Ascending aorta (tissue), 2 donors: ENCODE measurements at regions of chr9 and their contacts with region 1.

Region 1: DNA sequence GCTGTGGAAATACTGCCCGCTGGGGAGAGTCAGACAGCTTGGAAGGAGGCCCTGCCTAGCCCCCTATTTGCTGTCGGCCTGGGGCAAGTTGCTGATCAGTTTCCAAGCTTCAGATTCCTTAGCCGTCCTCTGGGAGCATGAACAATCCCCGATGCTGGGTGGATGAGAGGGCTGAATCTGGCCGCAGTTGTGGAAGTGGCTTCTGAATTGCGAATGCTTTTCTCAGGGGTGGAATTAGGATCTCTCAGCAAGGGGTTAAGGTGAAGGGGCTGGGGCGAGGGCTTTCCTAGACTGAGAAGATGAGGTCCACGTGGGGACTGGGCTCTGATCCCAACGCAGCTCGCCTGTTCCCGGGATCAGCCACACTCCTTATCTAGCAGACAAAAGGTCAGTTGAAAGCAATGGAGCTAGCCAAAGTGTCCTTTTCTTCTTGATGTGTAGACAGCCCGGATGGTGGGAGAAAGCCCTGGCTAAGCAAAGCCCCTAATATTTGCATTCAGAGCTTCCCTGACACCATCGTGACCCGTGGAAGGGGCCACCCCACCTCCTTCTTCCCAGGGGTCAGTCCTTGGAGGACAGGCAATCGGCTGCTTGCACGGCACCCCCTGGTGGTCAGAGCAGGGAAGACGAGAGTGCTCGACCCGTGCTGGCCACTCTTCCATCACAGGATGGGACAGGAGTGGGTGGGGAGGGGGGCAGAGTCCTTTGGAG is 54.9 kb downstream of the COL15A1 start:
- DNase-seq: peak in 1 of 2 donors; percentile 92
- H3K4me3 ChIP-seq: peak overlapping the region; percentile 10 to 46
- H3K27ac ChIP-seq: peak overlapping the region; percentile 37 to 63
- H3K4me1 ChIP-seq: peaks cover 2 to 28% of the 10 kb centered on the region in 2 donors
- H3K27me3 ChIP-seq: no peaks in the 10 kb centered on the region
- CTCF ChIP-seq: peak; percentile 81 to 91 (median 84)

Region 2: DNA sequence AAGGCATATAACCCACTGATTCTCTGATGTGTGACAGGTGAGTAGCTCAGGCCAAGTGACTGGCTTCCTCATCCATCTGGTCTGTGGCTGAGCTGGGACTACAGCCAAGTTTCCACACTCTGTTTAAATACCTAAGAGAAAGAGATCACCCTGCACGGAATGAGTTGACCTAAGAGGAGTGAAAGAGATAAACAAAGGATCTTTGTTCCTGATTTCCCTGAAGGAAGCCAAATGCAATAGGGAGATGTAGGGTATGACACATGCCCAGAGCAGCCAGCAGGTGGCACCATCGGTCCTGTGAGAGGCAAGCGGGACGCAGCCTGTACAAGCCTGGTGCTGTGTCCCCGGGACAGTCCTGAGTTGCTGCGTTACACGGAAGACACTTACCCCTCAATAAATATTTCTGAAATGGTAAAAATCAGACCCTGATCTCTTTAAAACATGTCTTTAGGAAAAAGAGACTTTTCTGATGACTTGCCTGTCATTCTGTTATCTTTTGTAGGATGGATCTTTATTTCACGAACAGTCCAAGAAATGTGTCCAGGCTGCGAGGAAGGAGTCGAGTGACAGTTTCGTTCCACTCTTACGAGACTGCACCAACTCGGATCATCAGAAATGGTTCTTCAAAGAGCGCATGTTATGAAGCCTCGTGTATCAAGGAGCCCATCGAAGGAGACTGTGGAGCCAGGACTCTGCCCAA is 150.0 kb before region 1 on chr9:
- intact Hi-C with region 1: loop called (anchors 1 kb)
- DNase-seq: peak; percentile 26 to 92
- H3K4me3 ChIP-seq: peak overlapping the region; percentile 35 to 55
- H3K27ac ChIP-seq: no peak overlapping the region
- H3K4me1 ChIP-seq: no peaks in the 10 kb centered on the region
- H3K27me3 ChIP-seq: no peaks in the 10 kb centered on the region
- CTCF ChIP-seq: peak; percentile 78 to 90 (median 83)

Region 3: GRCh38 chr9:98860871-98861293 is 137.7 kb before region 1 on chr9:
- intact Hi-C with region 1: loop called (anchors 5 kb)
- DNase-seq: peak in 1 of 2 donors; percentile 79
- H3K4me3 ChIP-seq: no peak overlapping the region
- H3K27ac ChIP-seq: no peak overlapping the region
- H3K4me1 ChIP-seq: no peaks in the 10 kb centered on the region
- H3K27me3 ChIP-seq: no peaks in the 10 kb centered on the region
- CTCF ChIP-seq: peak in 2 of 3 experiments; percentile 7 to 58

Region 4: DNA sequence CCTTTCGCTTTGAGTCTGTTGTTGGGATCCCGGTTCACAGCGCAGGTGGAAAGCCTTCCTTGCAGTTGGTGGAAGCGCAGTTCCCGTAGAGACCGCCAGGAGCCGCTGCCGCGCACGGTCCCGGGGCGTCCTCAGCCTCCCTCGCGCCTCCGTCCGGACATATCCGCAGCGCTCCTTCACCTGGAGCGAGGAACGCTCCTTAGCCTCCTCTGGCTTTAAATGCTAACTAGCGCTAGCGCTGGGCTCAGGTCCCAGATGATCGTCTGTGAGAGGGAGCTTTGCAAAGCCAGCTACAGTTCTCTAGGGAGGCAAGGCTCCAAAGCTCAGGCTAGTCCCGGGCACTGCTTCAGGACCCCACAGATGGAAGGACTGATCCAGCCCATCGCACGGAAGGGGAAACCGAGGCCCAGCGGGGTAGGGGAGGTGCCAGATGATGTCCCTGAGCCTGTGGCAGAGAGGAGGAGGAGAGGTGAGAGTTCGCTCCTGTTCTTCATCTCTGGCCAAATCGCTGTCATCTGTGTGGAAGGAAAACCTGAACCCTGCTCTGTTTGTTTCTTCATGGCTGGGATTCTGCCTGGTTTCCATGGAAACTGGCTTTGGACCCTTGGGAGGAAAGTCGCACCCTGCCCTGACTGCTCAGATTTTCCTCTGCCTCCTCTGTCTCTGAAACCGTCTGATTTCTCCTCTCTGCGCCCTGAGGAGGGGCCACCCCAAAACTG is 23.4 kb before region 1 on chr9:
- intact Hi-C with region 1: loop called (anchors 1 kb)
- DNase-seq: peak in 1 of 2 donors; percentile 92
- H3K4me3 ChIP-seq: peak overlapping the region; percentile 39 to 56
- H3K27ac ChIP-seq: peak overlapping the region; percentile 40 to 47
- H3K4me1 ChIP-seq: peaks cover 0 to 29% of the 10 kb centered on the region in 2 donors
- H3K27me3 ChIP-seq: no peaks in the 10 kb centered on the region
- CTCF ChIP-seq: peak; percentile 94 to 100 (median 99)

Region 5: DNA sequence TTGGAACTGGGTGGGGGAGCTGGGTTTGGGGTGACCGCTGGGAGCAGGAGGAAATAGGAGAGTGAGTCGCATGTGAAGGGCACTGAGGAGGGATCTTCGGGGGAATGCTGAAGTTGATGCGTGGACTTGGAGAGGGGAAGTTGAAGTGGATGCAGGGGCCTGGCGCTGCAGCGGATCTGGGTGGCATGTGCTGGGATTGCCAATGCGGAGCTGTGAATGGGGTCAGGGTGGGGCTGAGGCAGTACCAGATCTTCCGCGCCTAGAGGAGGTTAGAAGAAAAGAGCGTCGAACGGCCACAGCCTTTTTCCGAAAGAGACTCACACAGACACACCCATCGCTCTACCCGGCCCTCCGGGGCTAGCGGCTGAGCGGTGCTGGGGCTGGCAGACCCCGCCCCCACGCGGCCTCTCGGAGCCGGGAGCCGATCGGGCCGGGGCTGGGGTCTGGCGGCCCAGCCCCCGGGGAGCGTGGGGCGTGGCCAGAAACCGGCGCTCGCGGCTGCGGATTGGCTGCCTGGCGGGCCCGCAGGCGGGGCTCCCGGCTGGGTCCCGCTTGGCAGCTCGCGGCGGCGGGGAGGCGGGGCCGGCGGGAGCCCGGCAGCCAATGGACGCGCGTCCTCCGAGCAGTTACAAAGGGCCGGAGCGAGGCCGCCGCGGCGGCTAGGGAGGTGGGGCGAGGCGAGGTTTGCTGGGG is 106.0 kb after region 1 on chr9 and contains the start of gene TGFBR1:
- intact Hi-C with region 1: loop called (anchors 2 kb)
- DNase-seq: peak; percentile 72 to 97
- H3K4me3 ChIP-seq: peak within 1 kb of the TSS; percentile 82 to 87
- H3K27ac ChIP-seq: peak within 1 kb of the TSS; percentile 92 to 95
- H3K4me1 ChIP-seq: peaks cover 0 to 34% of the 10 kb centered on the region in 2 donors
- H3K27me3 ChIP-seq: no peaks in the 10 kb centered on the region
- CTCF ChIP-seq: no peak
- total RNA-seq, gene TGFBR1: 13.9 TPM

Region 6: DNA sequence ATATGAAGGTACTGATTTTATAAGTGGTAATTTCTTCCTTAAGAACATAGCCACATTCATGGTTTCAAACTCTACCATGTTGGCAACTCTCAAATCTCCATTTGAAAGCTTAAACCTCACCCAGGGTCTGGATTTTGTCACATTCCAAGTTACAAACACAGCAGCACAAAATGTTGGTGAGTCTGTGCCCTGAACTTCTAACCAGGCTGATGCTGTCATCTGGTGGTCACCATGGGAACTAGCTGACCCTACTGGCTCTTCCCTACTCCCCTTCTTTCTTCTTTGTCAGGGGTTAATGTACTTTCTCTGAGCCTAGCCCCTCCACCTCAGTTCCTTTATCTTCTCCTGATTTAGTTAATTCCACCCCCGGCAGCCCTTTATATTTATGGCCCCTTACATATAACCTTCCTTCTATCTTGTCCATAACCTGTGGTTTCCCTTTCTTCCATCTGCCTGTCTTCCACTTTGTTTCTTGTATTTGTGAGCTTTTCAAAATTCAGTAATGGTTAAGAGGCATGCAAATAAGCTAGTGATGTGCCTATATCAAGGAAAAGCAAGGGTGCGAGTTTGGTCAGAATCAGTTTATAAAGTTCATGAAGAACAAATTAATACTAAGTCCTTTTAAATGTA is 142.2 kb after region 1 on chr9:
- intact Hi-C with region 1: loop called (anchors 2 kb)
- DNase-seq: peak in 1 of 2 donors; percentile 60
- H3K4me3 ChIP-seq: no peak overlapping the region
- H3K27ac ChIP-seq: no peak overlapping the region
- H3K4me1 ChIP-seq: no peaks in the 10 kb centered on the region
- H3K27me3 ChIP-seq: no peaks in the 10 kb centered on the region
- CTCF ChIP-seq: peak; percentile 71 to 78 (median 72)

Region 7: DNA sequence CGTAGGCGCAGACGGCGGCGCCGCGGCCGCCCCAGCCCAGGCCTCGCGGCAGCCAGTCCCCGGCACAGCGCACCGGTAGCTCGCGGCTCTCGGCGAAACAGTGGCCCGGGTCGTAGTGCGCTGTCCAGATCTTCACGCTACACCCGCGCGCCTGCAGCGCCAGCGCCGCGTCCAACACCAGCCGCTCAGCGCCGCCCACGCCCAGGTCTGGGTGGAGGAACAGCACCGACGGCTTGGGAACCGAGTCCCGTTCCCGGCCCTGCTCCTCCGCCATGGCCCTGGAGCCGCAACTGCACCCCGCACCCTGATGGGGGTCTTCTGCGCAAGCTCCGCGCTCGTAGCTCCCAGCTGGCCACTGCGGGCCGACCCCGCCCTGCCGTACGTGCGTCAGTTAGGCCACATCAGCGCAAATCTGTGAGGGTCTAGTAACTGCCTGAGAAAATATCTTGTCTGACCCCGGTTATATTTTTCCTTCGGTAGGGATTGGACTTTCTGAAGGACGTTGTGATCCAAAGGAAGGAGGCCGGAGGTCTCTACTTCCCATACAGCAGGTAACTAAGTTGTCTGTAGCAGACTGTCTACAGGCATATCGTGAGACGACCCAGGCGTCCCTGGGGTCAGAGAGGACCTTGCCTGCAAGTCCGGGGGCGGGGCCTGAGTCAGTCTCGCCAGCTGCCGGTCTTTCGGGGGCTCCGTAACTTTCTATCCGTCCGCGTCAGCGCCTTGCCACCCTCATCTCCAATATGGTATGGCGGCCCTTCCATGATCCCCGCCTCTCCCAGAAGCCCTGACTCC is 223.2 kb after region 1 on chr9 and contains the starts of genes ALG2 and SEC61B:
- intact Hi-C with region 1: loop called (anchors 10 kb)
- DNase-seq: peak; percentile 70 to 96
- H3K4me3 ChIP-seq: peak within 1 kb of the TSS; percentile 94 to 99
- H3K27ac ChIP-seq: peak within 1 kb of the TSS; percentile 88 to 93
- H3K4me1 ChIP-seq: peaks cover 13 to 28% of the 10 kb centered on the region in 2 donors
- H3K27me3 ChIP-seq: no peaks in the 10 kb centered on the region
- CTCF ChIP-seq: peak in 1 of 3 experiments; percentile 13
- total RNA-seq, gene ALG2: 17.1 TPM
- total RNA-seq, gene SEC61B: 88.7 TPM

Region 8: DNA sequence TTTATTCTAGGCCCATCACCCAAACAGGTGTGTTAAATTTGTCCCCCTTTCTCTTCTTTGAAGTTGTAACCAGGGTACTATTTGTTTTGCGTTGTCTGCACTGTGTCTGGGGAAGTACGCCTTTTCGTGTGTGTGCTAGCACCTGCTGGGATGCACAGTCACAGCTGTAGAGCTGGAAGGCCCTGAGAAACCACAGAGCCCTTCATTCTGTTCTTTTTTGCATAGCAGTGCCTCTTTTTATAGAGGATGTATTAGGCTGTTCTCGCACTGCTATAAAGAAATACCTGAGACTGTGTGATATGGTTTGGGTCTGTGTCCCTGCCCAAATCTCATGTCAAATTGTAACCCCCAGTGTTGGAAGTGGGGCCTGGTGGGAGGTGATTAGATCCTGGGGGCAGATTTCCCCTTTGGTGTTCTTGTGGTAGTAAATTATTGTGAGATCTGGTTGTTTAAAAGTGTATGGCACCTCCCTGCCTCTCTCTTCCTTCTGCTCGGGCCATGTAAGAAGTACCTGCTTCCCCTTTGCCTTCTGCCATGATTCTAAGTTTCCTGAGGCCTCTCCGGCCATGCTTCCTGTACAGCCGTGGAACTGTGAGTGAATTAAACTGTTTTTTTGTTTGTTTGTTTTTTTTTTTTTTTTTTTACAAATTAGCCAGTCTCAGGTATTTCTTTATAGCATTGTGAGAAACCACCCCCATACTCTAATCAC is 237.5 kb after region 1 on chr9:
- intact Hi-C with region 1: no loop called
- DNase-seq: no peak
- H3K4me3 ChIP-seq: no peak overlapping the region
- H3K27ac ChIP-seq: no peak overlapping the region
- H3K4me1 ChIP-seq: no peaks in the 10 kb centered on the region
- H3K27me3 ChIP-seq: no peaks in the 10 kb centered on the region
- CTCF ChIP-seq: no peak